ENCODE measurements at regions of chr6 and their contacts with region 1.

Region 1: GRCh38 chr6:36094753-36095496 is 35.4 kb upstream of the MAPK13 start:
- DNase-seq: peak; percentile 66
- H3K4me3 ChIP-seq: peak overlapping the region in 1 of 2 experiments; percentile 39; a peak in 1 of 4 replicates
- H3K27ac ChIP-seq: no peak overlapping the region; a peak in 2 of 4 replicates
- H3K4me1 ChIP-seq: peaks cover 0 to 20% of the 10 kb centered on the region in 2 experiments; a peak in 2 of 4 replicates
- H3K27me3 ChIP-seq: no peaks in the 10 kb centered on the region
- CTCF ChIP-seq: peak; percentile 97
- EP300 ChIP-seq: no peak
- RAD21 ChIP-seq: peak; percentile 95

Region 2: GRCh38 chr6:35970181-35970580 is 124.7 kb before region 1 on chr6:
- CTCF ChIA-PET with region 1: no interaction called
- POLR2A ChIA-PET with region 1: no interaction called
- DNase-seq: no peak
- H3K4me3 ChIP-seq: no peak overlapping the region
- H3K27ac ChIP-seq: no peak overlapping the region
- H3K4me1 ChIP-seq: no peaks in the 10 kb centered on the region
- H3K27me3 ChIP-seq: no peaks in the 10 kb centered on the region
- CTCF ChIP-seq: no peak
- EP300 ChIP-seq: no peak
- RAD21 ChIP-seq: no peak

Region 3: DNA sequence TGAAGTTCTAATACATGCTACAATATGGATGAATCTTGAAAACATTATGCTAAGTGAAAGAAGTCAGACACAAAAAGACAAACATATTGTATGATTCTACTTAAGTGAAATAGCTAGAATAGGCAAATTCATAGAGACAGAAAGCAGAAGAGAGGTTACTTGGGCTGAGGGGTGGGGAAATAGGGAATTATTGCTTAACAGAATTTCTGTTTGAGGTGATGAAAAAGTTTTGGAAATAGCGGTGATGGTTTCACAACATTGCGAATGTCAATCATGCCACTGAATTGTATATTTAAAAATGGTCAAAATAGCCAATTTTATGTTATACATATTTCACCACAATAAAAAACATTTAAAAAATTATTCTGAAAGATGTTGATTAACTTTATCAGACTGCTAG is 76.6 kb before region 1 on chr6:
- CTCF ChIA-PET with region 1: interaction called, 13 read pairs
- POLR2A ChIA-PET with region 1: interaction called, 6 read pairs
- DNase-seq: no peak
- H3K4me3 ChIP-seq: no peak overlapping the region
- H3K27ac ChIP-seq: no peak overlapping the region
- H3K4me1 ChIP-seq: no peaks in the 10 kb centered on the region
- H3K27me3 ChIP-seq: no peaks in the 10 kb centered on the region; the same call in 1 of the 2 replicates
- CTCF ChIP-seq: no peak
- EP300 ChIP-seq: no peak
- RAD21 ChIP-seq: no peak

Region 4: DNA sequence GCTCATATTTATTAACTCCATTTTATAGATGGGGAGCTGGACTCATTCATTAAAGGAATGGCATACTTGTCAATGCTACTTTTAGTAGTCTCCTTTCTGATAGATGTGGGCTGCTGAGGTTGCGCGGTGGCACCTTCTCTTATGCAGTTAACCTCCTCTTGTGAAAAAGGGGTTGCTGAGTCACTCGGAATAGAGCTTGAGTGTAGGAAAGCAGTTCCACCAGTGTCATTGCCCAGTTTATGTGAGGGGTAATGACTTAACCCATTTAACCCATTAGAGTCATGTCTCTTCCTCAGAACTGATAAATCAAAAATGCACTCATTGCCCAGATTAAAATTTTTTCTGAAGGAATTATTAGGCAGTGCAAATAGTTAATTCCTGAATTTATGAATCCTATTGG is 61.0 kb before region 1 on chr6:
- CTCF ChIA-PET with region 1: interaction called, 224 read pairs
- POLR2A ChIA-PET with region 1: interaction called, 14 read pairs
- DNase-seq: no peak
- H3K4me3 ChIP-seq: no peak overlapping the region
- H3K27ac ChIP-seq: no peak overlapping the region
- H3K4me1 ChIP-seq: no peaks in the 10 kb centered on the region; a peak in 3 of 4 replicates
- H3K27me3 ChIP-seq: no peaks in the 10 kb centered on the region
- CTCF ChIP-seq: no peak
- EP300 ChIP-seq: no peak
- RAD21 ChIP-seq: no peak

Region 5: DNA sequence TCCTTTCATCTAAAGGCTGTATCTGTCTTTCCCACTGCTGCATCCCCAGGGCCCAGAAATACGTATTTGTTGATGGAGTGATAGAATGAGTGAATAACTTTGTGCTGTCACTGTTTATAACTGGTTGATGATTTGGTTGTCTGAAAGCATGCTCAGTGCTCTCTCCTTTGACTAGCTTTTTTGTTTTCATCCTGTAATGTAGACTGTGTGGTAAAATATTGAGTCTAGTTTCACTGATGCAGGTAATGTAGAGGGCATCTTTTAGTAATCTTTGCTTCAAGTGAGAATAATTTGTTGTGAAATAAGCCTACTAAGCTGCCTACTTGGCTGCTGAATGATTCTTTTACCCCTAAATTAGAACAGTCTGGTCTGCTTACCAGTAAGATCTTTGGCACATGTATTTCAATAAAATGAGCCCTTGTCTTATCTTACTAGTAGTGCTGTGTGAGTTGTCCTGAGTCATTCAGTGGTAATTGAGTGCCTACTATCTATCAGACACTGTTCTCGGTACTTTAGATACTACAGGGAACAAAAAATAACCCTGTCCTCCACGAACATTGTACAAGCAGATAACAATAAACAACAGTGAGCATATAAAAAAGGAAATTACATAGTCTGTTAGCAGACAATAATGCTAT is 27.4 kb before region 1 on chr6:
- CTCF ChIA-PET with region 1: interaction called, 21 read pairs
- POLR2A ChIA-PET with region 1: no interaction called
- DNase-seq: no peak
- H3K4me3 ChIP-seq: no peak overlapping the region
- H3K27ac ChIP-seq: peak overlapping the region in 1 of 2 experiments; percentile 12; a peak in 1 of 4 replicates
- H3K4me1 ChIP-seq: peaks cover 9 to 22% of the 10 kb centered on the region in 2 experiments; a peak in 3 of 4 replicates
- H3K27me3 ChIP-seq: no peaks in the 10 kb centered on the region
- CTCF ChIP-seq: no peak
- EP300 ChIP-seq: no peak
- RAD21 ChIP-seq: no peak

Region 6: DNA sequence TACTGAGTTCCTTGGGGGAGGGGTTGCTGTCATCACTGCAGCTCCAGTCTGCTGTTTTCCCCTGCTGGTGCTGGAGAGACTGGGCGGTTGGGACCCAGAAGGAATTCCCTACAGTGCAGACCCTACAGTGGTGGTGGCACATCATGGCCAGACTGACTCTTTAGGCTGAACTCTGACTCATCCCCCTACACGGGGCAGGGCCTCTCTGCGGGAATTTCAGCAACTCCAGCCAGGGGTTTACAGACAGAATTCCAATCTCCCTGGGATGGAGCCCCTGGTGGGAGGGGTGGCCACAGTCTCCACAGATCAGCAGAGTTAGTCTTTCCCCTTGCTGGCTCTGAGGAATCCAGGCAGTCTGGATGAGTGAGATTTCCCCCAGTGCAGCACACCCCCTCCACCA is 11.5 kb before region 1 on chr6:
- CTCF ChIA-PET with region 1: interaction called, 48 read pairs
- POLR2A ChIA-PET with region 1: no interaction called
- DNase-seq: no peak
- H3K4me3 ChIP-seq: no peak overlapping the region
- H3K27ac ChIP-seq: no peak overlapping the region
- H3K4me1 ChIP-seq: no peaks in the 10 kb centered on the region
- H3K27me3 ChIP-seq: no peaks in the 10 kb centered on the region
- CTCF ChIP-seq: no peak
- EP300 ChIP-seq: no peak
- RAD21 ChIP-seq: no peak

Region 7: DNA sequence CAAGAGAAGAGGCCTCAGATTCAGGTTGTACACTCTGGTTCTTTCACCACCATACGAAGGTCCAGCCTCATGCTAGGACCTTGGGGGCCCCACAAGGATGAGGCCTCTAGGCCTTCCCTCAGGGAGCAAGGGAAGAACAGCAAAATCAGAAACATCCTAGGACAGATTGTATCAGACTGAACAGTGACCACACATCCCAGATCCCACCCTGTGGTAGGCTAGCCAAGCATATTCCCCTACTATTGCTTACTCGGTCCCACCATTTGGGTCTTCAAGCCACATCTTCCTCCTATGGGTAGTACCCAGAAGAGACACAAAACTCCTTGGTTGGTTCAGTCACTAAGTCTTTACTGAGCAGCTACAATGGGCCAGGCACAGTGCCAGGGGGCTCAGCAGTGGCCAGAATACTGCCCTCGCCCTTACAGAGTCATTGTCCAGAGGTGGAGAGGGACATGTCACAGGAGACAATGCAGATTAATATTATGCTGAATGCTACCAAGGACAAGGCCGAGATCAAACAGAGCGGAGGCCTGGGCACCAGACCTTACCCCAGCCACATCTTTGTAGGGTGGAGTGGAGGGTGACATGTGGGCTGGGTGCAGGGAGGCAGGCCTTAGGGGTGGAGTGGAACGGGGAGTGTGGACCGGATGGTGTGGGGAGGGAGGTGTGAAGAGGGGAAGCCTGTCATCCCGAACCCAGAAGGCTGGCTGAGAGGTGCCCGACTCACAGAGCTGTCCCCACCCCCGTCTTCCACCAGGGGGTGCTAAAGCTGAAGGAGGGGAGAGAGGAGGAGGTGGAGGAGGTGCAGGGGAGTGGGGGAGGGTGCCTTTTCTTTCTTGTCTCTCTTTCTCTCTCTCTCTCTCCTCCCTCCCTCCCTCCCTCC is 28.6 kb after region 1 on chr6:
- CTCF ChIA-PET with region 1: interaction called, 17 read pairs
- POLR2A ChIA-PET with region 1: no interaction called
- DNase-seq: peak; percentile 89
- H3K4me3 ChIP-seq: no peak overlapping the region
- H3K27ac ChIP-seq: no peak overlapping the region
- H3K4me1 ChIP-seq: peaks cover 0 to 28% of the 10 kb centered on the region in 2 experiments; a peak in 1 of 4 replicates
- H3K27me3 ChIP-seq: no peaks in the 10 kb centered on the region
- CTCF ChIP-seq: peak; percentile 66
- EP300 ChIP-seq: no peak
- RAD21 ChIP-seq: peak; percentile 79

Region 8: GRCh38 chr6:36266913-36267644 is 172.2 kb after region 1 on chr6:
- CTCF ChIA-PET with region 1: no interaction called
- POLR2A ChIA-PET with region 1: no interaction called
- DNase-seq: no peak
- H3K4me3 ChIP-seq: no peak overlapping the region
- H3K27ac ChIP-seq: no peak overlapping the region
- H3K4me1 ChIP-seq: peaks cover 0 to 7% of the 10 kb centered on the region in 2 experiments; a peak in 1 of 4 replicates
- H3K27me3 ChIP-seq: no peaks in the 10 kb centered on the region; the same call in 1 of the 2 replicates
- CTCF ChIP-seq: no peak
- EP300 ChIP-seq: no peak
- RAD21 ChIP-seq: no peak